Right cardiac atrium (tissue), 5 donors: ENCODE measurements at regions of chr6 and their contacts with region 1.

Region 1: GRCh38 chr6:131305037-131305850 is 170.0 kb downstream of the AKAP7 start:
- DNase-seq: no peak
- ATAC-seq: no peak
- H3K4me3 ChIP-seq: no peak overlapping the region
- H3K27ac ChIP-seq: no peak overlapping the region
- H3K4me1 ChIP-seq: no peaks in the 10 kb centered on the region
- H3K27me3 ChIP-seq: no peaks in the 10 kb centered on the region

Region 2: GRCh38 chr6:131063028-131063763 is 242.0 kb before region 1 on chr6 and contains the start of gene EPB41L2:
- intact Hi-C with region 1: no loop called
- DNase-seq: peak; percentile 90 to 97 (median 96)
- ATAC-seq: peak; percentile 98 to 99
- H3K4me3 ChIP-seq: peak within 1 kb of the TSS; percentile 92
- H3K27ac ChIP-seq: peak within 1 kb of the TSS; percentile 73
- H3K4me1 ChIP-seq: no peaks in the 10 kb centered on the region
- H3K27me3 ChIP-seq: no peaks in the 10 kb centered on the region
- total RNA-seq, gene EPB41L2: 95.3 to 120 (median 107) TPM

Region 3: DNA sequence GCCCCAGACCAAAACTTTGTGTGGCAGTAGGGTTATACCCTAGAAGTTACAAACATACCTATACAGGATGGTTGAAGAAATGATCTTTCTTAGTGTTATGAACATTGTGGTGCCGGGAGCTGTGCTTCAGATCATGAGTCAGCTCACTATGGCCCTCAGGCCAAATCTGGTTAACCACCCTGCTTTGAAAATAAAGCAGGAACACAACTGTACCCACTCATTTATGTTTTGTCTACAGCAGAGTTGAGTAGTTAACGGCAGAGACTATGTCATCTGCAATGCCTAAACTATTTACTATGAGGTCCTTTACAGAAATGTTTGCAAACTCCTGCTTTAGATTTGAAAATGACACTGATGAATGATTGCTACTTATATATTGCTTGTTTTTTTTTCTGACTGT is 145.6 kb before region 1 on chr6:
- intact Hi-C with region 1: no loop called
- DNase-seq: no peak
- ATAC-seq: no peak
- H3K4me3 ChIP-seq: no peak overlapping the region
- H3K27ac ChIP-seq: no peak overlapping the region
- H3K4me1 ChIP-seq: peaks cover 2% of the 10 kb centered on the region
- H3K27me3 ChIP-seq: no peaks in the 10 kb centered on the region

Region 4: GRCh38 chr6:131519670-131520436 is 214.6 kb after region 1 on chr6:
- intact Hi-C with region 1: loop called in 1 of 4 experiments (anchors 5 kb)
- DNase-seq: no peak
- ATAC-seq: peak in 1 of 2 donors; percentile 19
- H3K4me3 ChIP-seq: no peak overlapping the region
- H3K27ac ChIP-seq: no peak overlapping the region
- H3K4me1 ChIP-seq: no peaks in the 10 kb centered on the region
- H3K27me3 ChIP-seq: no peaks in the 10 kb centered on the region